OCI-LY7 (cell line): ENCODE measurements at regions of chr14 and their contacts with region 1.

Region 1: GRCh38 chr14:59306775-59307174 is 118.3 kb downstream of the DAAM1 start:
- DNase-seq: no peak
- H3K4me3 ChIP-seq: no peak overlapping the region
- H3K27ac ChIP-seq: no peak overlapping the region
- H3K4me1 ChIP-seq: peaks cover 87% of the 10 kb centered on the region
- CTCF ChIP-seq: no peak

Region 2: DNA sequence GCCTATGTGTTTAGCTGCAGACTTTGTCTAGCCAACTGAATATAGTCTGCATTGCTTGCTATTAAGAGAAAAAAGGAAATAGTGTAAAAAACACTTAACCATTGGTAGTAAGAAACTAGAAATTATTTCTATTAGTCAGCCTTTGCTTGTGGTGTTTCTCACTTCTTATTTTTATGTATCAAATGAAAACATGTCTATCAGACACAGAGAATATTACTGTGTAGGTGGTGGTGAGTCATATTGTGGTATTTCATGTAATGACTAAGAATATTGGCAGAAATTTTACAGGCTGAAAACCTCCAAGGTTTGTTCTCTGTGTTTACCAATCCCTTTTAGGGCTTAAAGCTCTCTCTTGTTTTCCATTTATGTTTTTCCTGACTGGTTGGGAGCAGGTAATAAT is 31.1 kb before region 1 on chr14:
- CTCF ChIA-PET with region 1: no interaction called
- POLR2A ChIA-PET with region 1: interaction called, 24 read pairs
- intact Hi-C with region 1: no loop called
- DNase-seq: no peak
- H3K4me3 ChIP-seq: no peak overlapping the region
- H3K27ac ChIP-seq: peak overlapping the region; percentile 13
- H3K4me1 ChIP-seq: peaks cover 34% of the 10 kb centered on the region
- CTCF ChIP-seq: no peak

Region 3: DNA sequence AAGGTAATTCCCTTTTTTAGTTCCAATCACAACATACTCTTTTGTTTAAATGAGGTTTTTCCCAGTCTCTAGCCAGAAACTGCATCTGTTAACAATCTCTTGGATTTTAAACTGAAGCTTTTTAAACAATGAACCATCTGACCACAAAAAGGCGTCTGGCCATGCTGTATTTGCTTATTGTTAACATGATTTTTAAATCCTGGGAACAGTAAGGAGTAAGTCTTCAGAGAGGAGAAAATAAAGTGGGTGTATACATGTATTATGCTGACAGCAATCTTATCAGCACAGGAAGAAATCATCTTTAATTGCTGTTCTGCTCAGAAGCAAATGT is 12.1 kb before region 1 on chr14:
- CTCF ChIA-PET with region 1: interaction called, 3 read pairs
- POLR2A ChIA-PET with region 1: interaction called, 26 read pairs
- intact Hi-C with region 1: no loop called
- DNase-seq: no peak
- H3K4me3 ChIP-seq: no peak overlapping the region
- H3K27ac ChIP-seq: no peak overlapping the region
- H3K4me1 ChIP-seq: peaks cover 42% of the 10 kb centered on the region
- CTCF ChIP-seq: no peak